Left colon (tissue), 2 donors: ENCODE measurements at regions of chr21 and their contacts with region 1.

Region 1: GRCh38 chr21:46110499-46111192 is 12.7 kb downstream of the COL6A2 start:
- DNase-seq: peak; percentile 4 to 40
- ATAC-seq: no peak

Region 2: GRCh38 chr21:46060596-46061061 is 50.0 kb before region 1 on chr21:
- intact Hi-C with region 1: loop called in 1 of 2 experiments (anchors 5 kb)
- DNase-seq: peak in 1 of 2 donors; percentile 60
- ATAC-seq: no peak